Ovary (tissue), 10 donors: ENCODE measurements at regions of chr3 and their contacts with region 1.

Region 1: GRCh38 chr3:123328851-123329635 is 119.8 kb downstream of the ADCY5 start:
- DNase-seq: peak; percentile 72 to 89 (median 87)
- H3K4me3 ChIP-seq: no peak overlapping the region
- H3K27ac ChIP-seq: no peak overlapping the region
- H3K4me1 ChIP-seq: peaks cover 16% of the 10 kb centered on the region
- H3K27me3 ChIP-seq: no peaks in the 10 kb centered on the region
- CTCF ChIP-seq: peak; percentile 91 to 95 (median 93)
- EP300 ChIP-seq: no peak
- POLR2A ChIP-seq: no peak

Region 2: GRCh38 chr3:123449102-123449996 is 120.3 kb after region 1 on chr3:
- intact Hi-C with region 1: loop called in 2 of 4 experiments (anchors 2 to 5 kb)
- DNase-seq: peak; percentile 46 to 71 (median 67)
- H3K4me3 ChIP-seq: peak overlapping the region; percentile 75
- H3K27ac ChIP-seq: peak overlapping the region; percentile 91 to 95
- H3K4me1 ChIP-seq: peaks cover 16% of the 10 kb centered on the region
- H3K27me3 ChIP-seq: no peaks in the 10 kb centered on the region
- CTCF ChIP-seq: no peak
- EP300 ChIP-seq: no peak
- POLR2A ChIP-seq: peak; percentile 18

Region 3: DNA sequence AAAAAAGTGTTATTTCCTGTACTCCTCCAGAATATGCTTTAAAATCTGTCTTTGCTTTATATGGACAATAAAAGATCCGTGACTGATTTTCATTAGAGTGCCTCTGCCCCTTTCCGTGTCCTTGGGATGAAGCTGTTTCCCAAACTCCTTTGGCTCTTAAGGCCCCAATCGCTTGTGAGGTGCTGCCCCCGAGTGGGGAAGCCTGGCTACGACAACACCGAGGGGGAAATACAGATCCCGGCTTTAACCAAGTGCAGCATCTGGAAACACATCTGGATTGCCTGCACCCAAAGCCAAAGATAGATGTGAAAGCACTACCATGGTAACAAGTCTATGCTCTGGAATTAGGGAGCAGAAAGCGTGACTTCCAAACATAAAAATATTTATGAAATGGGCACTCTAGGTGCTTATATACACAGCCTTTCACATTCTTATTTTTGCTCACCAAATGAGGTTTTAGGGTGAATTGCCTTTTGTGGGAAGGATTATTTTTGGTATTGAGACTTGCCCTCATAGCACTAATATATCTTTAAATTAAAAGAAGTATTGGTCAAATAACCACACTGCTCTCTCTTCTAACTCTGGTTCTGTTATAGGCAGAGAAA is 160.5 kb after region 1 on chr3:
- intact Hi-C with region 1: loop called (anchors 1 to 5 kb)
- DNase-seq: peak; percentile 66 to 88 (median 86)
- H3K4me3 ChIP-seq: no peak overlapping the region
- H3K27ac ChIP-seq: no peak overlapping the region
- H3K4me1 ChIP-seq: peaks cover 2% of the 10 kb centered on the region
- H3K27me3 ChIP-seq: no peaks in the 10 kb centered on the region
- CTCF ChIP-seq: peak; percentile 88 to 93 (median 93)
- EP300 ChIP-seq: no peak
- POLR2A ChIP-seq: no peak

Region 4: DNA sequence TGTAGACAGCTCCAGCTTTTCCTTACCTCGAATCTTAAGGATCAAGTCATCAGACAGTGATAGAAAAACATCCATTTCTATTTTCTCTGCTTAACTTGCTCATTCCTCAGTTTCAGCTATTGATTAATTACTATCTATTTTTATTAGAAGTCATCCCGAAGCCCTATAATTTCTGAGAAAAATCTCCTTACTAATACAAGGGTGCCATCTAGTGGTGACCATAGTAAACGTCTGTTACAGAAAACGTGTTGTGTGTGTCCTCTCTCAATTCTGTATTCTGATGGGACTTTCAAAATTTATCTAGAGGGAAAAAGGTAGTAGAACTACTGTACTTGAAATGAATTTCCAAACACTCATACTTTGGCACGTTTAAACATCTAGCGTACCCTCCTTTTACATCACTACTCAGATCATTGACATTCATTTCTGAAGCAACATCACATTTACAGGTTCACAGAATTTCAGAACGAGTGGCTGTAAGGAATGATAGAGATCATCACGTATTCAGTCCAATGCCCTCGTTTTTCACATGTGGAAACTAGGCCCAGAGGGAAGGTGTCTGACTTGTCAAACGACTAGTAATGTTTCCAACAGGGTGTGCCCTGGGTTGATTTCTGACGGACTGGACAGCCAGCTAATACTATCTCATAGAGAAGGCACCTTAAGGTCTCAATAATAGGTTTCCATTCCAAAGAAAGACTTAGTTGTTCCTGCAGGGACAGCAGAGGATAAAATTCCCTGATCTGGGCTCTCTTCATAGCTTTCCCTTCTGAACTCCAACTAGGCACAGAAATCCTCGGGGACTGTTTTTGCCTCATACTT is 230.2 kb after region 1 on chr3:
- intact Hi-C with region 1: loop called in 2 of 4 experiments (anchors 2 to 5 kb)
- DNase-seq: no peak
- H3K4me3 ChIP-seq: no peak overlapping the region
- H3K27ac ChIP-seq: no peak overlapping the region
- H3K4me1 ChIP-seq: no peaks in the 10 kb centered on the region
- H3K27me3 ChIP-seq: no peaks in the 10 kb centered on the region
- CTCF ChIP-seq: peak; percentile 62 to 76 (median 66)
- EP300 ChIP-seq: no peak
- POLR2A ChIP-seq: no peak

Region 5: GRCh38 chr3:125129512-125129962 is 1800.5 kb after region 1 on chr3:
- intact Hi-C with region 1: loop called in 1 of 4 experiments (anchors 5 kb)
- DNase-seq: no peak
- H3K4me3 ChIP-seq: no peak overlapping the region
- H3K27ac ChIP-seq: no peak overlapping the region
- H3K4me1 ChIP-seq: no peaks in the 10 kb centered on the region
- H3K27me3 ChIP-seq: no peaks in the 10 kb centered on the region
- CTCF ChIP-seq: no peak
- EP300 ChIP-seq: no peak
- POLR2A ChIP-seq: no peak